Naive thymus-derived CD4-positive, alpha-beta T cell (primary cell): ENCODE measurements at regions of chr3 and their contacts with region 1.

Region 1: GRCh38 chr3:118884748-118885206 is 149.9 kb downstream of the IGSF11 start:
- DNase-seq: peak; percentile 58 to 83 (median 76)
- ATAC-seq: peak; percentile 88
- H3K4me3 ChIP-seq: no peak overlapping the region
- H3K4me3 Mint-ChIP-seq: peak overlapping the region in 5 of 10 donors; percentile 21 to 63 (median 40)
- H3K27ac ChIP-seq: no peak overlapping the region
- H3K27ac Mint-ChIP-seq: no peak overlapping the region
- H3K4me1 ChIP-seq: no peaks in the 10 kb centered on the region
- H3K4me1 Mint-ChIP-seq: peaks cover 0 to 18% (median 7%) of the 10 kb centered on the region in 7 donors
- H3K27me3 ChIP-seq: no peaks in the 10 kb centered on the region
- H3K27me3 Mint-ChIP-seq: peaks cover 8 to 16% (median 11%) of the 10 kb centered on the region in 5 donors

Region 2: GRCh38 chr3:118949113-118949760 is 64.5 kb after region 1 on chr3:
- CTCF ChIA-PET with region 1: interaction called, 5 read pairs
- POLR2A ChIA-PET with region 1: no interaction called
- intact Hi-C with region 1: loop called in 1 of 2 experiments (anchors 1 kb)
- DNase-seq: peak in 7 of 9 donors; percentile 19 to 54 (median 40)
- ATAC-seq: peak; percentile 85
- H3K4me3 ChIP-seq: no peak overlapping the region
- H3K4me3 Mint-ChIP-seq: peak overlapping the region; percentile 31 to 91 (median 74)
- H3K27ac ChIP-seq: no peak overlapping the region
- H3K27ac Mint-ChIP-seq: peak overlapping the region; percentile 61 to 91 (median 83)
- H3K4me1 ChIP-seq: peaks cover 6 to 31% of the 10 kb centered on the region in 2 donors
- H3K4me1 Mint-ChIP-seq: peaks cover 19 to 78% (median 63%) of the 10 kb centered on the region in 7 donors
- H3K27me3 ChIP-seq: no peaks in the 10 kb centered on the region
- H3K27me3 Mint-ChIP-seq: peaks cover 0 to 13% (median 0%) of the 10 kb centered on the region in 5 donors

Region 3: GRCh38 chr3:118968111-118968510 is 83.3 kb after region 1 on chr3:
- CTCF ChIA-PET with region 1: interaction called, 10 read pairs
- POLR2A ChIA-PET with region 1: no interaction called
- intact Hi-C with region 1: no loop called
- DNase-seq: no peak
- ATAC-seq: no peak
- H3K4me3 ChIP-seq: no peak overlapping the region
- H3K4me3 Mint-ChIP-seq: no peak overlapping the region
- H3K27ac ChIP-seq: no peak overlapping the region
- H3K27ac Mint-ChIP-seq: no peak overlapping the region
- H3K4me1 ChIP-seq: no peaks in the 10 kb centered on the region
- H3K4me1 Mint-ChIP-seq: peaks cover 0 to 5% (median 0%) of the 10 kb centered on the region in 7 donors
- H3K27me3 ChIP-seq: no peaks in the 10 kb centered on the region
- H3K27me3 Mint-ChIP-seq: peaks cover 0 to 31% (median 10%) of the 10 kb centered on the region in 5 donors

Region 4: GRCh38 chr3:119087799-119088198 is 203.0 kb after region 1 on chr3:
- CTCF ChIA-PET with region 1: interaction called, 23 read pairs
- POLR2A ChIA-PET with region 1: interaction called, 3 read pairs
- intact Hi-C with region 1: no loop called
- DNase-seq: no peak
- ATAC-seq: no peak
- H3K4me3 ChIP-seq: no peak overlapping the region
- H3K4me3 Mint-ChIP-seq: no peak overlapping the region
- H3K27ac ChIP-seq: no peak overlapping the region
- H3K27ac Mint-ChIP-seq: no peak overlapping the region
- H3K4me1 ChIP-seq: no peaks in the 10 kb centered on the region
- H3K4me1 Mint-ChIP-seq: no peaks in the 10 kb centered on the region
- H3K27me3 ChIP-seq: no peaks in the 10 kb centered on the region
- H3K27me3 Mint-ChIP-seq: peaks cover 0 to 18% (median 9%) of the 10 kb centered on the region in 5 donors

Region 5: DNA sequence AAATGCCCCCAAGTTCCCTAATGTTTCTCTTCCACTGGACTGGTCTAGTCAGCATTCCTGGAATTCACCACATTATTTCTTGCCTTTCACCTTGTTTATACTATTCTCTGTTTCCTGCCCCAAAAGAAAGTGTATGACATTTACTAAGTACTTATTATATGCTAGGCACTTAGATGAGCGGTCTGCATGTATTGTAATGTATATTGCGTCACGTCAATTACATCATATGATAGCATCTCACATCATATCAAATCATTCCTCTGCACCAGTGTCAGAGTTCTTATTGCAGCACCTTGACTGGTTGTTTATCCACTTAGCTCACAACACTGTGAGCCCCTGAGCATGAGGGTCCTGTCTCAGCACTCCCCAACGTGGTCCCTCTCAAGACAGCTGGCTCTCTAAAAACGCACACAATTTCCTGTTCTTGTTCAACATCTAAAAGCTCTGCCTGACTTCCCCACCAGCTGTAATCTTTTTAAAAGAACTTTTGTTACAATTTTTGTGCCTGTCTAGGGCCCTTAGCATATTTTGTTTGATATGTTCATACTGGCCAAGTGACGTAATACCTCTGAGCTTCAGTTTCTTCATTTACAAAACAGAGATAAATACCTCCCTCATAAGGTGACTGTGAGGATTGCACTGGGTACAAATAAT is 468.2 kb after region 1 on chr3:
- CTCF ChIA-PET with region 1: interaction called, 10 read pairs
- POLR2A ChIA-PET with region 1: no interaction called
- intact Hi-C with region 1: loop called (anchors 1 to 10 kb)
- DNase-seq: peak in 7 of 9 donors; percentile 53 to 78 (median 69)
- ATAC-seq: peak; percentile 77
- H3K4me3 ChIP-seq: no peak overlapping the region
- H3K4me3 Mint-ChIP-seq: peak overlapping the region in 8 of 10 donors; percentile 2 to 67 (median 54)
- H3K27ac ChIP-seq: no peak overlapping the region
- H3K27ac Mint-ChIP-seq: peak overlapping the region in 8 of 9 donors; percentile 13 to 81 (median 42)
- H3K4me1 ChIP-seq: peaks cover 0 to 35% of the 10 kb centered on the region in 2 donors
- H3K4me1 Mint-ChIP-seq: peaks cover 26 to 47% (median 36%) of the 10 kb centered on the region in 7 donors
- H3K27me3 ChIP-seq: no peaks in the 10 kb centered on the region
- H3K27me3 Mint-ChIP-seq: peaks cover 0 to 20% (median 0%) of the 10 kb centered on the region in 5 donors

Region 6: DNA sequence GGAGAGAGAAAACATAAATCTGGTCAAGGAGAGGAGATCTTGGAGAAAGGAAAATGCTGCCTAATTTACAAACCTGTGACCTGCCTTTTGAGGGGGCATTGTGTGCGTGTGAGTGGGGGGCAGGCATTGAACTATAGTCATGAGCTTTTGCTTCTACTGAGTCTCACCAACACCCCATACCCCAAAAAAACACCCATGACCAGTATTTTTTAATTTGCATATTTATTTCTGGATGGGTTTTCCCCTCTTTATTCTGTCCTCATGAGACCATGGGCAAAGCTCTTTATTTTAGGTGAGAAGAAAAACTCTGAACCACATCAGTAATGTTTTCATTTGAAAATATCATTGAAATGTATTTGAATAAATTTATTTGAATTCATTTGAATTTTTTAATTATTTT is 654.0 kb after region 1 on chr3:
- CTCF ChIA-PET with region 1: no interaction called
- POLR2A ChIA-PET with region 1: no interaction called
- intact Hi-C with region 1: no loop called
- DNase-seq: no peak
- ATAC-seq: no peak
- H3K4me3 ChIP-seq: no peak overlapping the region
- H3K4me3 Mint-ChIP-seq: no peak overlapping the region
- H3K27ac ChIP-seq: no peak overlapping the region
- H3K27ac Mint-ChIP-seq: no peak overlapping the region
- H3K4me1 ChIP-seq: no peaks in the 10 kb centered on the region
- H3K4me1 Mint-ChIP-seq: no peaks in the 10 kb centered on the region
- H3K27me3 ChIP-seq: no peaks in the 10 kb centered on the region
- H3K27me3 Mint-ChIP-seq: peaks cover 0 to 6% (median 0%) of the 10 kb centered on the region in 5 donors

Region 7: DNA sequence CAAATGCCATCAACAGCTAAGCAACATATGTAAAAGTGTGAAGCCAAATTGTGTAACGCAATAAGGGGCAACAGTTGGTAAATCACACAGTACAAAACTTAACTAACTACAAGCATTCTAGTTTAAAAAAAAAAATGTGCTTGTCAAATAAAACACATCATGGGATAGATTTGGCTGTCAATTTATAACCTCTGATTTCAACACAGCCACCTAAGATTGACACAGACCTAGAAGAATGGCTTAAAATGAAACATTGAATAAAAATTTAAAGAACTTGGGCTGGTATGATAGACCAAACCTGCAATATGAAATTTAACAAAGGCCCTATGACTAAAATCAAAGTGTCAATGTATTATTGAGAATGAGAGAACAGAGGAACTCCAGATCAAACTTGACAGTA is 1045.5 kb after region 1 on chr3:
- CTCF ChIA-PET with region 1: no interaction called
- POLR2A ChIA-PET with region 1: no interaction called
- intact Hi-C with region 1: no loop called
- DNase-seq: no peak
- ATAC-seq: no peak
- H3K4me3 ChIP-seq: no peak overlapping the region
- H3K4me3 Mint-ChIP-seq: no peak overlapping the region
- H3K27ac ChIP-seq: no peak overlapping the region
- H3K27ac Mint-ChIP-seq: no peak overlapping the region
- H3K4me1 ChIP-seq: peaks cover 0 to 3% of the 10 kb centered on the region in 2 donors
- H3K4me1 Mint-ChIP-seq: peaks cover 2 to 40% (median 37%) of the 10 kb centered on the region in 7 donors
- H3K27me3 ChIP-seq: no peaks in the 10 kb centered on the region
- H3K27me3 Mint-ChIP-seq: no peaks in the 10 kb centered on the region

Region 8: GRCh38 chr3:120417272-120417911 is 1532.6 kb after region 1 on chr3:
- CTCF ChIA-PET with region 1: no interaction called
- POLR2A ChIA-PET with region 1: no interaction called
- intact Hi-C with region 1: loop called in 1 of 2 experiments (anchors 2 kb)
- DNase-seq: peak; percentile 58 to 83 (median 79)
- ATAC-seq: peak; percentile 100
- H3K4me3 ChIP-seq: peak overlapping the region; percentile 72
- H3K4me3 Mint-ChIP-seq: peak overlapping the region; percentile 80 to 89 (median 88)
- H3K27ac ChIP-seq: no peak overlapping the region
- H3K27ac Mint-ChIP-seq: peak overlapping the region in 8 of 9 donors; percentile 13 to 76 (median 32)
- H3K4me1 ChIP-seq: no peaks in the 10 kb centered on the region
- H3K4me1 Mint-ChIP-seq: peaks cover 16 to 24% (median 18%) of the 10 kb centered on the region in 7 donors
- H3K27me3 ChIP-seq: no peaks in the 10 kb centered on the region
- H3K27me3 Mint-ChIP-seq: peaks cover 0 to 7% (median 6%) of the 10 kb centered on the region in 5 donors